Activated T-helper 1 cell treated with anti-CD3 and anti-CD28 coated beads, Interleukin-12 subunit alpha, Interleukin-12 subunit beta, Interleukin-2, Interleukin-4 antibody, amounts not matched to agents 30 ng/mL and 10 ng/mL and 1 ng/mL, durations not matched to agents 14 hours and 24 hours and 36 hours (primary cell): ENCODE measurements at regions of chr7 and their contacts with region 1.

Region 1: GRCh38 chr7:66844552-66845378 is 76.3 kb upstream of the TMEM248 start:
- DNase-seq: peak; percentile 99
- H3K4me3 Mint-ChIP-seq: peak overlapping the region; percentile 90
- H3K27ac Mint-ChIP-seq: peak overlapping the region; percentile 98
- H3K4me1 Mint-ChIP-seq: peaks cover 19% of the 10 kb centered on the region
- H3K27me3 Mint-ChIP-seq: peaks cover 8% of the 10 kb centered on the region

Region 2: GRCh38 chr7:65750511-65751344 is 1094.0 kb before region 1 on chr7:
- intact Hi-C with region 1: loop called (anchors 1 kb)
- DNase-seq: peak; percentile 89
- H3K4me3 Mint-ChIP-seq: peak overlapping the region; percentile 100
- H3K27ac Mint-ChIP-seq: peak overlapping the region; percentile 97
- H3K4me1 Mint-ChIP-seq: peaks cover 11% of the 10 kb centered on the region
- H3K27me3 Mint-ChIP-seq: no peaks in the 10 kb centered on the region

Region 3: DNA sequence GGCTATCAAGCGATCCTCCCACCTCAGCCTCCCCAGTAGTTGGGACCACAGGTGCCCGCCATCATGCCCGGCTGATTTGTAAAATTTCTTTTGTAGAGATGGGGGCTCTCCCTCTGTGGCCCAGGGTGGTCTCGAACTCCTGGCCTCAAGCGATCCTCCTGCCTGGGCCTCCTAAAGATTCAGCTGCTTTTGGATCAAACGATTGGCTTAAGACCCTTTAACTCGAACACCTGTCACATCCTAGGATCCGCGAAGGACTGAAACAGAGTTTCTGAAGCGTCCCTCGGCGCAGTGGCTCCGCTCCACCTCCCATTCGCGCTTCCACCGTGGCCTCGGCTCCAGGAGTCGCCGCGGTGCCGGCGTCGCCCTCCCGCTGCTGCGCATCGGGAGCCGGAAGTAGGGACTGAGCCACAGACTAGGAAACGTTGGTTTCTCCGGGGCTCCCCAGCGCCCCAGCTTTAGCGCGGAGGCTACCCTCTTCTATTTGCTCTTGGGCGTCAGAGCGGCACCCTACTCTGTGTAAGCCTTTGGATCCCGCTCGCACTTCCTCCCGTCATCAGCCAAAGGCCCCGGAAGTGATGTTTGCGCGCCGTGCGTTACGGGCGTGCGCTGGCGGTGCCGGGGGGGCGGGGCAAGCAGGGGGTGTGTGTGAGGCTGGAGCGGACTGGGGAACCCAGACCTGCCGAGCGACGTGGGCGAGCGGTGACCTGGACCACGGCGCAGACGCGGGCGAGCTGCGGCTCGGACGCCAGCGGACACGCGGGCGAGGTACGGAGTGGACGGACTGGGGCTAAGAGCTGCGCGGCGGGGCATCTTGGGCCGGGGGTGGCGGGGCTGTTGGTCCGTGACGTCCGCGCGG is 163.0 kb before region 1 on chr7:
- intact Hi-C with region 1: loop called (anchors 2 kb)
- DNase-seq: peak; percentile 93
- H3K4me3 Mint-ChIP-seq: peak overlapping the region; percentile 93
- H3K27ac Mint-ChIP-seq: peak overlapping the region; percentile 96
- H3K4me1 Mint-ChIP-seq: peaks cover 21% of the 10 kb centered on the region
- H3K27me3 Mint-ChIP-seq: no peaks in the 10 kb centered on the region

Region 4: DNA sequence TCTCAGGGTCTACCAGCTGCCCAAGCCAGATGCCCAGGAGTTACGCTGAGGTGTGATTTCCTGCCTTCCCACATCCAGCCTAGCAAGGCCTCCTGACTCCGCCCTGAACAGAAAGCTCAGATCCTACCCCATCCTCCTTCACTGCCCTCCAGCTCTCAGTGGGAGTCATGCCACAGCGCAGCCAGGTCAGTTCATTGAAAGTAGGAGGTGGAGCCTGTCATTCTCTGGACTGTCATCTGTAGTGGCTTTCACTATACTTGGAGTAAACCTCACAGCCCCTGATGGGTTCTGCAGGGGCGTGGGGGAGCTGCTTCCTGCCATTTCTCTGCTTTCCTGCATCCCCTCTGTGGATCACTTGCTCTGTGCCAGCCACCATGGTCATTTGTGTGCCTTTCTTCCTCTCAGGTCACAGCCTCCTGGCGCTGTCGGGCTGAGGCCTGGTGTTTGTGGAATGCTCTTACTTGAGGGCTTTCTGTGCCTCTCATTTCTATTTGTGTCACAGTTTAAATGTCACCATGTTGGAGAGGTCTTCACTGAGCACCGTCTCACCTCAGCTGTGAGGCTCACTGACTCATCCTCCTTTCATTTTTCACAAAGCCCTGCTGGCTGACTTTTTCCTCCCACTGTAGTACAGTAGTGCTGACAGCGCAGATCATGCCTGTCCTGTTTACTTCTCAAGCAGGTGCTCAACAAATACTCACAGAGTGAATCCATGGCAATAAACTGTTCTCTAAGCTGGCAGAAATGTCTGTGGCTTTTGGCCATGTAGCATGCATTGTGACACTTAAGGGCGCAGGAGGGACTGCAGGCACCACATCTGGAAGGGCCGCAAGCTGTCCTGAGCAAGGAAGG is 15.3 kb after region 1 on chr7:
- intact Hi-C with region 1: loop called (anchors 1 kb)
- DNase-seq: peak; percentile 14
- H3K4me3 Mint-ChIP-seq: peak overlapping the region; percentile 72
- H3K27ac Mint-ChIP-seq: peak overlapping the region; percentile 99
- H3K4me1 Mint-ChIP-seq: peaks cover 21% of the 10 kb centered on the region
- H3K27me3 Mint-ChIP-seq: no peaks in the 10 kb centered on the region

Region 5: DNA sequence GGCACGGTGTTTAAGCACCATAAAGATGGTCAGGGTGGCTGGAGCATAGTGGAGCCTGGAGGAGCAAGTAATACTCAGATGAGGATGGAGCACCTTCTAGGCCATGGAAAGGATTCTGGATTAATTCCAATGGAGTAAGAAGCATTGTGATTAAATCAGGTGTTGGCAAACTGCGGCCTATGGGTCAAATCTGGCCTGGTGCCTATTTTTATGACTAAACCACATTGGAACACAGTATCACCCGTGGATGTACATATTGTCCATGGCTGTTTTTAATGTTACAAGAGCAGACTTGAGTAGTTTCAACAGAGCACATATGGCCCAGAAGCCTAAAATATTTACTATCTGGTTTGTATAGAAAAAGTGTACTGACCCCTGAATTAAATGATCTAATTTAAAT is 26.3 kb after region 1 on chr7:
- intact Hi-C with region 1: no loop called
- DNase-seq: no peak
- H3K4me3 Mint-ChIP-seq: no peak overlapping the region
- H3K27ac Mint-ChIP-seq: peak overlapping the region; percentile 21
- H3K4me1 Mint-ChIP-seq: no peaks in the 10 kb centered on the region
- H3K27me3 Mint-ChIP-seq: no peaks in the 10 kb centered on the region

Region 6: DNA sequence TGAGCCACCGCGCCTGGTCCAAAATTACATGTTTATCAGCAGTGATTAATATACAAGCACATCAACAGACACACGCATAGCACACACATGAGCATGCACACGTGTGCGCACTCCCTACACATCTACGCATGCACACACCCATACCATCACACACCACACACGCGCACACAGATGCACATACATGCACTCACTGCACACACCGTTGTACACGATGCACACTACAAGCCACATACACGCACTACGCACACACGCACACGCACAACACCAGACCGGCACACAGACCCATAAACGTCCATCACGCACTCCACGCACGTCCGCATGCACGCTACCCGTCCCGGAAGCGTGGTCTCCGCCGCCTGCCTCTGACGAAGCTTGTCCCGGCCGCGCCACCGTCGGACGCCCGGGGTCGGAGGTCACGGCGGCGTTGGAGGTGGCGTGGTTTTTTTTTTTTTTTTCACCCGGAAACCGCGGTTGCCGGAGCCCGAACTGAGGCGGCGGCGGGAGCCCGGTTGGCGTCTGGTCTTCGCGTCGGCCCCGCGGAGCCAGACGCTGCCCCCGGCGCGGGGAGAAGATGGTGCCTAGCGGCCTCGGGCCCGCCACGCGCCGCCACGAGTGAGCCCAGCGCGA is 76.1 kb after region 1 on chr7 and contains the start of gene TMEM248:
- intact Hi-C with region 1: loop called (anchors 1 kb)
- DNase-seq: peak; percentile 90
- H3K4me3 Mint-ChIP-seq: peak within 1 kb of the TSS; percentile 98
- H3K27ac Mint-ChIP-seq: peak within 1 kb of the TSS; percentile 98
- H3K4me1 Mint-ChIP-seq: peaks cover 21% of the 10 kb centered on the region
- H3K27me3 Mint-ChIP-seq: no peaks in the 10 kb centered on the region
- total RNA-seq, gene TMEM248: 83.6 and 95.6 TPM in 2 replicates